IMR-90 (cell line): ENCODE measurements at regions of chr16 and their contacts with region 1.

Region 1: GRCh38 chr16:3150346-3151218 is 15.8 kb downstream of the ZNF213 start:
- DNase-seq: peak; percentile 92
- ATAC-seq: peak; percentile 84
- H3K4me3 ChIP-seq: peak overlapping the region; percentile 58
- H3K27ac ChIP-seq: peak overlapping the region; percentile 61
- H3K4me1 ChIP-seq: peaks cover 3% of the 10 kb centered on the region; the same call in 1 of the 2 replicates
- H3K27me3 ChIP-seq: no peaks in the 10 kb centered on the region
- CTCF ChIP-seq: no peak
- POLR2A ChIP-seq: no peak
- RAD21 ChIP-seq: no peak

Region 2: GRCh38 chr16:3166510-3166895 is 15.9 kb after region 1 on chr16:
- CTCF ChIA-PET with region 1: no interaction called
- POLR2A ChIA-PET with region 1: no interaction called
- dilution Hi-C with region 1: no loop called
- in situ Hi-C with region 1: no loop called
- intact Hi-C with region 1: loop called (anchors 1 kb)
- DNase-seq: no peak
- ATAC-seq: no peak
- H3K4me3 ChIP-seq: no peak overlapping the region
- H3K27ac ChIP-seq: no peak overlapping the region
- H3K4me1 ChIP-seq: no peaks in the 10 kb centered on the region
- H3K27me3 ChIP-seq: peaks cover 26% of the 10 kb centered on the region
- CTCF ChIP-seq: no peak
- POLR2A ChIP-seq: no peak
- RAD21 ChIP-seq: no peak